ENCODE measurements at regions of chr3 and their contacts with region 1.

Region 1: GRCh38 chr3:16264708-16265454 is at the starts of genes DPH3 and OXNAD1:
- DNase-seq: peak; percentile 99
- H3K4me3 Mint-ChIP-seq: peak within 1 kb of the TSS; percentile 93
- H3K27ac Mint-ChIP-seq: peak within 1 kb of the TSS; percentile 94
- H3K4me1 Mint-ChIP-seq: peaks cover 36% of the 10 kb centered on the region
- H3K27me3 Mint-ChIP-seq: no peaks in the 10 kb centered on the region
- total RNA-seq, gene DPH3: 23.4 TPM
- total RNA-seq, gene OXNAD1: 23.5 to 24.0 TPM

Region 2: DNA sequence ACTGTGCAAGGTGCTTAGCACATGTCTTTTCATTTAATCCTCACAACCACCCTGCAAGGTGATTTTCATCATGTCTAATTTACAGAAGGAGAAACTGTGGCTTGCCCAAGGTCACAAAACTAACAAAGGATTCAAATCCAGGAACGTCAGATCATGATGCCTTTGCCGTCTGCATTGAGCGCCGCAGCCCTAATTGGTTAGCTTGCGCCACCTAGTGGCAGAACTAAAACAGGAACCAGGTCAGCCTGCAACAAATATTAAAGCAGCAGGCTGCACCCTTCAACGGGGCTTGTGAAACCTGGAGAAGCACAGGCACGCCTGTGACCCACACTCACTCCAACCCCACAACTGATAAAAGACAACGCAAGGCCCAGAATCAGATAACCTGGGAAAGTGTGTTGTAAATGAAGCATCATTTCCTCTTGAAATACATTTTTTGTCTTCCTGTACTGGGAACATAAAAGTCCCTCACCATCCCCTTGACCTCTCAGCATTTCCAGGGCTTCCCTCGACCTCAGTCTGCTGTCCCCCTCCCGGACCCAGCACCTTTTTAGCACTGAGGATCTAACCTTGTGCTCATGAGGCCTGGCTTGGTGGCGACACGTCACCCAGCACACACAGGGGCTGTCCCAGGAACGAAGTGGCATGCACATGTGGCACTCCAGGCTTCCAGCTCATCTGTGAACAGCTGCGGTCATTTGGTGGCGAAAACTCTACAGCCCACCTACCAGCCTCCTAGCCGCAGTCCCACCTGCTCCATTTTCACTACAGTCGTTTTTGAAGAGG is 17.4 kb before region 1 on chr3:
- CTCF ChIA-PET with region 1: interaction called, 12 read pairs
- POLR2A ChIA-PET with region 1: no interaction called
- intact Hi-C with region 1: no loop called
- DNase-seq: peak; percentile 84
- H3K4me3 Mint-ChIP-seq: no peak overlapping the region
- H3K27ac Mint-ChIP-seq: no peak overlapping the region
- H3K4me1 Mint-ChIP-seq: peaks cover 17% of the 10 kb centered on the region
- H3K27me3 Mint-ChIP-seq: no peaks in the 10 kb centered on the region

Region 3: GRCh38 chr3:16309558-16309957 is 44.7 kb after region 1 on chr3:
- CTCF ChIA-PET with region 1: interaction called, 10 read pairs
- POLR2A ChIA-PET with region 1: interaction called, 8 read pairs
- intact Hi-C with region 1: loop called (anchors 1 kb)
- DNase-seq: peak; percentile 76
- H3K4me3 Mint-ChIP-seq: peak overlapping the region; percentile 33
- H3K27ac Mint-ChIP-seq: peak overlapping the region; percentile 84
- H3K4me1 Mint-ChIP-seq: peaks cover 91% of the 10 kb centered on the region
- H3K27me3 Mint-ChIP-seq: no peaks in the 10 kb centered on the region

Region 4: DNA sequence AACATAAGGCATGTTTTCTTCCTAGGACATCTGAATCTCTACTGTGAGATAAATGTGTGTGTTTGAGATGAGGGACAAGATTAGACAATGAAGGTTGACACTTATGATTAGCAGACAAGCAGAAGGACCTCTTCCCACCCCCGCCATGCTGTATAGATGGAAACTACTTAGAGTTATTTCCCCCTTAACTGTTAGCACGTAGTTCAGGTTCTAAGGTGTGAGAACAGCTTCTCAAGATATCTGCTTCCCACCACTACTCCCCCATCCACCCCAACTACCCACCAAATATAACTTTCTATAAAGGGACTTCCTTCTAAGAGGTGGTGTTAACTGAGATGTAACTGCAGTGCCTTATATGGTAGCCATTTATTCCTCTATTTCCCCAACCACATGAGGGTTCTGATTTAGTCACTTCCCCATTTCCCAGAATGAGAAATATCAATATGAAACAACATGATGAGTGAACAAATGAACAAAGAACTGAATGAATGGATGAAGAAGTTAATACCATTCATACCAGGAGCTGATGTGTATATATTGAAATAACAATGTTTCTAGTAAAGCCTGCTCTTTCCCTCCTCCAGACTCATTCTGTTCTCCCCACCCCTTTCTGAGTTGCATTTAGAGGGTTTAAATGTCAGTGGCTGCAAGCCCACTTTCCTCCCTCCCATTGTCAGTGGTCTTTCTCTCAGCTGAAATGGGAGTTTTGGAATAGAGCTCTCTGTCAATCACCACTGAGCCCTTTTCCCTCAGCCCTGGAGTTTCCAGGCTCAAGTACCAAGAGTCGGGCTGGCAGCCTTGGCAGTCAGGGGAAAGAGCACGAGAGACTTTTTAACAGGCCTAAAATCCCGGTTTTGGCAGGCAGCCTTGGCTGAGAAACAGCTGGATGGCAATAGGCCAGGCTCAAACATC is 256.3 kb after region 1 on chr3:
- CTCF ChIA-PET with region 1: interaction called, 3 read pairs
- POLR2A ChIA-PET with region 1: no interaction called
- intact Hi-C with region 1: loop called (anchors 2 kb)
- DNase-seq: peak; percentile 46
- H3K4me3 Mint-ChIP-seq: no peak overlapping the region
- H3K27ac Mint-ChIP-seq: peak overlapping the region; percentile 89
- H3K4me1 Mint-ChIP-seq: peaks cover 71% of the 10 kb centered on the region
- H3K27me3 Mint-ChIP-seq: no peaks in the 10 kb centered on the region

Region 5: GRCh38 chr3:16622932-16623331 is 358.1 kb after region 1 on chr3:
- CTCF ChIA-PET with region 1: no interaction called
- POLR2A ChIA-PET with region 1: no interaction called
- intact Hi-C with region 1: no loop called
- DNase-seq: no peak
- H3K4me3 Mint-ChIP-seq: no peak overlapping the region
- H3K27ac Mint-ChIP-seq: no peak overlapping the region
- H3K4me1 Mint-ChIP-seq: no peaks in the 10 kb centered on the region
- H3K27me3 Mint-ChIP-seq: peaks cover 4% of the 10 kb centered on the region

Measured in activated CD4-positive, alpha-beta memory T cell treated with anti-CD3 and anti-CD28 coated beads for 36 hours (primary cell).